ENCODE measurements at regions of chr19 and their contacts with region 1.

Region 1: GRCh38 chr19:18063463-18063862 is 23.3 kb downstream of the IL12RB1 start:
- DNase-seq: peak in 1 of 2 experiments; percentile 71
- H3K4me3 ChIP-seq: no peak overlapping the region
- H3K27ac ChIP-seq: no peak overlapping the region
- H3K4me1 ChIP-seq: no peaks in the 10 kb centered on the region
- H3K27me3 ChIP-seq: no peaks in the 10 kb centered on the region
- CTCF ChIP-seq: peak; percentile 43 to 63 (median 51)
- EP300 ChIP-seq: no peak
- POLR2A ChIP-seq: no peak
- RAD21 ChIP-seq: peak; percentile 62 to 69

Region 2: GRCh38 chr19:18007044-18007916 is 56.2 kb before region 1 on chr19:
- CTCF ChIA-PET with region 1: interaction called, 34 read pairs
- POLR2A ChIA-PET with region 1: interaction called, 4 read pairs
- DNase-seq: peak in 1 of 2 experiments; percentile 95
- H3K4me3 ChIP-seq: peak overlapping the region; percentile 19 to 75 (median 62); a peak in 7 of 8 replicates
- H3K27ac ChIP-seq: no peak overlapping the region
- H3K4me1 ChIP-seq: peaks cover 0 to 11% (median 4%) of the 10 kb centered on the region in 4 experiments; a peak in 5 of 7 replicates
- H3K27me3 ChIP-seq: peaks cover 0 to under 1% (median under 1%) of the 10 kb centered on the region in 4 experiments; a peak in 2 of 7 replicates
- CTCF ChIP-seq: peak; percentile 94 to 97 (median 95)
- EP300 ChIP-seq: no peak
- POLR2A ChIP-seq: peak in 1 of 2 experiments; percentile 29; a peak in 1 of 3 replicates
- RAD21 ChIP-seq: peak; percentile 97 to 98